ENCODE measurements at regions of chr5 and their contacts with region 1.

Region 1: DNA sequence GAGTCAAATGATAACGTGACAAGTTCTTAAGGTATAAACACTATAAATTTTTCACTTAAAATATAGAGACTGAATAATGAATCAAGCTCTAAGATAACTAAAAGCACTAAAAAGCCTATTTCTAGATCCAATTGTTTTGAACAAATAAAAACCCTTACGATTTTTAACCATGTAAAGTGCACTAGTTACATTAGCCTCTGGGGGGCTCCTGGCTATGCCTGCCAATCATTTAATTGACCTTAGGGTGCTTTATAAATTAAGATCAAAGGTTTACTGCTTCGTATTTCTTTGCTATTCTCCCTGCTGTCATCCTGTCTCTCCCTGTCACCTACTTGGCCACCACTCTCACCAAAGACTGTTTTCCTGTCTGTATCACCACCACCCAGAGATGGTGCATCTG is 133.4 kb downstream of the ESM1 start:
- DNase-seq: no peak
- ATAC-seq: no peak
- H3K4me3 ChIP-seq: no peak overlapping the region
- H3K27ac ChIP-seq: no peak overlapping the region
- H3K4me1 ChIP-seq: no peaks in the 10 kb centered on the region
- H3K27me3 ChIP-seq: no peaks in the 10 kb centered on the region
- CTCF ChIP-seq: no peak
- EP300 ChIP-seq: no peak
- POLR2A ChIP-seq: no peak
- RAD21 ChIP-seq: no peak

Region 2: GRCh38 chr5:54867310-54867944 is 15.4 kb after region 1 on chr5:
- CTCF ChIA-PET with region 1: interaction called, 13 read pairs
- POLR2A ChIA-PET with region 1: no interaction called
- RAD21 ChIA-PET with region 1: interaction called, 3 read pairs
- SMC1A ChIA-PET with region 1: interaction called, 4 read pairs
- in situ Hi-C with region 1: no loop called
- intact Hi-C with region 1: no loop called
- DNase-seq: no peak
- ATAC-seq: peak; percentile 38; the same call in 1 of the 3 replicates
- H3K4me3 ChIP-seq: no peak overlapping the region
- H3K27ac ChIP-seq: no peak overlapping the region
- H3K4me1 ChIP-seq: no peaks in the 10 kb centered on the region
- H3K27me3 ChIP-seq: peaks cover 2 to 4% of the 10 kb centered on the region in 2 experiments; a peak in 2 of 4 replicates
- CTCF ChIP-seq: peak; percentile 36 to 47 (median 46); a peak in 5 of 6 replicates
- EP300 ChIP-seq: no peak
- POLR2A ChIP-seq: no peak
- RAD21 ChIP-seq: peak; percentile 56

Region 3: DNA sequence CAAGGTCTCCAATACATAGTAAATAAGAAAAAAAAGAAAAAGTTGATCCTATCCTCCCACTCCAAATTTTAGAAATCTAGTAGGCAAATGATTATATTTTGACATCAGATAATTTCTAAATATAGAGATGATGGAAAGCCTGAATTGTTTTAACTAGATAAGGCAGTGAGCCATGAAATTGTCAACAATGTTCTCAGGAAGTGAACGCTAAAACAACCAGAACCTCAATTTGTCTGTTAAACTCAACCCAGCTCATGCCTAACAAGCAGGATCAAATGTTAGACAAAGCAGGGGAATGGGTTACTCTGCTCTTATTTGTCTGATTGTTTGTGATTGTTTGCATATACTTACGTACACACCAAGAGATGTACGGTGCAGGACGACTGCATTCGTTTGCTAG is 84.2 kb after region 1 on chr5:
- CTCF ChIA-PET with region 1: no interaction called
- POLR2A ChIA-PET with region 1: no interaction called
- RAD21 ChIA-PET with region 1: no interaction called
- SMC1A ChIA-PET with region 1: no interaction called
- in situ Hi-C with region 1: no loop called
- intact Hi-C with region 1: no loop called
- DNase-seq: no peak
- ATAC-seq: no peak
- H3K4me3 ChIP-seq: no peak overlapping the region
- H3K27ac ChIP-seq: no peak overlapping the region
- H3K4me1 ChIP-seq: no peaks in the 10 kb centered on the region
- H3K27me3 ChIP-seq: no peaks in the 10 kb centered on the region; a peak in 1 of 4 replicates
- CTCF ChIP-seq: no peak
- EP300 ChIP-seq: no peak
- POLR2A ChIP-seq: no peak
- RAD21 ChIP-seq: no peak